Activated T-helper 2 cell treated with anti-CD3 and anti-CD28 coated beads, Interferon-gamma antibody, Interleukin-2, Interleukin-4, amounts not matched to agents 10 μg/mL and 5 μg/mL and 100 μg/mL, durations not matched to agents 14 hours and 24 hours and 36 hours (primary cell): ENCODE measurements at regions of chr2 and their contacts with region 1.

Region 1: DNA sequence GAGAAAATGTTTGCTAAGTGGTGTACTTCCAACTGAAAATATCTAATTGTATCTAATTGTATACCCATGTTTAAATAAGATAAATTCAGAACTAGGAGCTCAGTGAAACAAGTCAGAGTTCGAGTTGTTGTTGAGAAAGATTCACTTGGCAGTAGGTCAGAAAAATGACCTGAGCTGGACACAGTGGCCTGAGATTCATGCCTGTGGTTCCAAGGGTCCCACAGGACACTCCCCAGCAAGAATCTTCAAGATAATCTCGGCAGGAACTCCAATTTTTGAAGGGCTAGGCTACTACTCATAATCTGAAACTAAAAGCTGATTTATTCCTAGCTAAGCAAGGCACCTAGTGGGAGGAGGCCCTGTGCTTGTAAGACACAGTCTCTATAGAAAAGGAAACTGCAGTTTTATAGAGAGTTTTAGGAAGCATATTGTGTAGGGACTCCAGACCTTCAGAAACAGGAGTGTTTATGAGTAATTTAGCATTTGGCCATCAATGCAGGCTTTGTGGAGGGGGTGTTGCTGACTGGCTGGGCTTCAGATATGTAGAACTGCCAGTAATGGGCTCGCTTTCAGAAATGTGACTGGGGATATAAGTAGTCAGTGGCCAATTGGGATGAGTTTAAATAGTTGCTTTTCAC is 43.2 kb downstream of the SP140 start:
- DNase-seq: no peak
- H3K4me3 Mint-ChIP-seq: peak overlapping the region; percentile 37
- H3K27ac Mint-ChIP-seq: peak overlapping the region; percentile 90
- H3K4me1 Mint-ChIP-seq: peaks cover 75% of the 10 kb centered on the region
- H3K27me3 Mint-ChIP-seq: no peaks in the 10 kb centered on the region

Region 2: DNA sequence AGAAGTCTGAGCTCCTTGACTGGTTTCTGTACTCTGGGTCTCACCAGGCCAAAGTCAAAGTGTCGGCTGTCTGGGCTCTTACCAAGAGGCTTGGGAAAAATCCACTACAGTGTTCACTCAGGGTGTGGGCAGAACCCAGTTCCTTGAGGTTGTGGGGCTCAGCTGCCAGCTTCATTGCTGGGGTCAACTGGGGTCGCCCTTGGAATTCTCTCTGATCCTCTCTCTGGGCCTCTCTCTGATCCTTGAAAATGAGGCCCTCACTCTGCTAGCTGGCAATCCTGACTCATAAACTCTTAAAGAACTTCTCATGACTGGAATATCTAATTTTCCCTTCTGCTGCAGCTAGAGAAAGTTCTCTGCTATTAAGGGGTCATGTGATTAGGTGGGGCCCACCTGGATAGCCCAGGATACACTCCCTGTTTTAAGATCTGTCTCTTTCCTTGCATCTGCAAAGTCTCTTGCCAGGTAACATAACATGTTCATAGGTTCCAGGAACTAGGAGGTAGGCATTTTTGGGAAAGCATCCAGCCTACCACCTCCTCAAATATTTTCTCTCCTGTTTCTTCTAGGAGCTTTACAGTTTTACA is 115.2 kb before region 1 on chr2:
- intact Hi-C with region 1: no loop called
- DNase-seq: no peak
- H3K4me3 Mint-ChIP-seq: no peak overlapping the region
- H3K27ac Mint-ChIP-seq: no peak overlapping the region
- H3K4me1 Mint-ChIP-seq: peaks cover 6% of the 10 kb centered on the region
- H3K27me3 Mint-ChIP-seq: no peaks in the 10 kb centered on the region

Region 3: GRCh38 chr2:230254152-230254881 is 14.4 kb before region 1 on chr2:
- intact Hi-C with region 1: loop called (anchors 1 kb)
- DNase-seq: peak; percentile 54
- H3K4me3 Mint-ChIP-seq: no peak overlapping the region
- H3K27ac Mint-ChIP-seq: no peak overlapping the region
- H3K4me1 Mint-ChIP-seq: peaks cover 17% of the 10 kb centered on the region
- H3K27me3 Mint-ChIP-seq: no peaks in the 10 kb centered on the region

Region 4: GRCh38 chr2:230296917-230297316 is 28.2 kb after region 1 on chr2:
- intact Hi-C with region 1: no loop called
- DNase-seq: no peak
- H3K4me3 Mint-ChIP-seq: no peak overlapping the region
- H3K27ac Mint-ChIP-seq: no peak overlapping the region
- H3K4me1 Mint-ChIP-seq: peaks cover 13% of the 10 kb centered on the region
- H3K27me3 Mint-ChIP-seq: no peaks in the 10 kb centered on the region

Region 5: DNA sequence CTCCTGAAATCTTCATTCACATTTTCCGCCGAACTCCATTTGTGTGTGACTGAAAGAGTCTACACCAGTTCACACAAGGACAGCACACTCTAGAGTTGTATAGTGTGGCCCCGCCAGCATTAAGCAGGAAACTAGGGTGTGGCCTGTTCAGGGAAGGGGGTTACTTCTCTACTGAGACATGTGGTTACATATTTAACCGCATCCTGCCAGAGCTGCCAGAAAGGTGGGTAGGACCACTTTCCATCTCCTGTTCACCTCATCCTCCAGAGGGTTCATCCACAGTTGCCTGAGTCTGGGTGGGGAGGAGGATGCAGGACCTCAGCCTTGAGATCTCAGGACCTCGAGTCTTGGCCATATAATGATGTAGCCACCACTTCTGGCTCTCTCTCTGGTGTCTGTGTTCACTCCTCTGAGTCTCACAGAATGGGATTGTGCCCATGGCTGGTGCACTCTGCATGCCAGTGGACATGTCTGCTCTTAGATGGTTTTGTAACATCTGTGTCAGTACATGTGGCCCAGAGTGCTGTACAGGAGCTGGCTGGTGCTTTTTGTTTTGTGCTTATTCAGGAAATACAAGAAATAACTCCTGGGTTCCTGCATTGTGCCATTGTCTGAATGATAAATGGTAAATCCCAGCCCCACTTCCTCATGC is 50.6 kb after region 1 on chr2:
- intact Hi-C with region 1: loop called (anchors 1 kb)
- DNase-seq: peak; percentile 79
- H3K4me3 Mint-ChIP-seq: peak overlapping the region; percentile 61
- H3K27ac Mint-ChIP-seq: peak overlapping the region; percentile 94
- H3K4me1 Mint-ChIP-seq: peaks cover 60% of the 10 kb centered on the region
- H3K27me3 Mint-ChIP-seq: no peaks in the 10 kb centered on the region

Region 6: GRCh38 chr2:230411570-230412370 is 143.0 kb after region 1 on chr2:
- intact Hi-C with region 1: loop called (anchors 10 kb)
- DNase-seq: peak; percentile 74
- H3K4me3 Mint-ChIP-seq: peak overlapping the region; percentile 98
- H3K27ac Mint-ChIP-seq: peak overlapping the region; percentile 100
- H3K4me1 Mint-ChIP-seq: peaks cover 61% of the 10 kb centered on the region
- H3K27me3 Mint-ChIP-seq: no peaks in the 10 kb centered on the region